ENCODE measurements at regions of chr19 and their contacts with region 1.

Region 1: GRCh38 chr19:37594304-37594981 is at the starts of genes ZNF540 and ZNF571:
- DNase-seq: peak; percentile 83 to 96 (median 93)
- ATAC-seq: peak; percentile 93
- H3K4me3 ChIP-seq: peak within 1 kb of the TSS; percentile 66 to 70
- H3K4me3 Mint-ChIP-seq: peak within 1 kb of the TSS; percentile 98
- H3K27ac ChIP-seq: peak within 1 kb of the TSS; percentile 84 to 97
- H3K27ac Mint-ChIP-seq: peak within 1 kb of the TSS; percentile 99
- H3K4me1 ChIP-seq: peaks cover 10% of the 10 kb centered on the region
- H3K4me1 Mint-ChIP-seq: peaks cover 31% of the 10 kb centered on the region
- H3K27me3 ChIP-seq: no peaks in the 10 kb centered on the region
- H3K27me3 Mint-ChIP-seq: no peaks in the 10 kb centered on the region
- CTCF ChIP-seq: no peak
- total RNA-seq, gene ZNF540: 17.8 to 20.1 TPM
- total RNA-seq, gene ZNF571: 30.5 to 30.8 TPM

Region 2: GRCh38 chr19:36687214-36688056 is 907.0 kb before region 1 on chr19 and contains the start of gene ZNF567:
- CTCF ChIA-PET with region 1: no interaction called
- POLR2A ChIA-PET with region 1: no interaction called
- intact Hi-C with region 1: loop called in 1 of 2 experiments (anchors 1 kb)
- DNase-seq: peak; percentile 91 to 99 (median 98)
- ATAC-seq: peak; percentile 91
- H3K4me3 ChIP-seq: peak within 1 kb of the TSS; percentile 82 to 87
- H3K4me3 Mint-ChIP-seq: peak within 1 kb of the TSS; percentile 99
- H3K27ac ChIP-seq: peak within 1 kb of the TSS; percentile 71 to 81
- H3K27ac Mint-ChIP-seq: peak within 1 kb of the TSS; percentile 96
- H3K4me1 ChIP-seq: peaks cover 18% of the 10 kb centered on the region
- H3K4me1 Mint-ChIP-seq: peaks cover 35% of the 10 kb centered on the region
- H3K27me3 ChIP-seq: no peaks in the 10 kb centered on the region
- H3K27me3 Mint-ChIP-seq: no peaks in the 10 kb centered on the region
- CTCF ChIP-seq: no peak
- total RNA-seq, gene ZNF567: 10.7 to 11.1 TPM

Region 3: GRCh38 chr19:36915992-36916830 is 678.2 kb before region 1 on chr19 and contains the starts of genes ZNF568 and ZNF829:
- CTCF ChIA-PET with region 1: no interaction called
- POLR2A ChIA-PET with region 1: no interaction called
- intact Hi-C with region 1: loop called (anchors 10 kb)
- DNase-seq: peak; percentile 82 to 97 (median 92)
- ATAC-seq: peak; percentile 97
- H3K4me3 ChIP-seq: peak within 1 kb of the TSS; percentile 75 to 79
- H3K4me3 Mint-ChIP-seq: peak within 1 kb of the TSS; percentile 89
- H3K27ac ChIP-seq: peak within 1 kb of the TSS; percentile 80 to 95
- H3K27ac Mint-ChIP-seq: peak within 1 kb of the TSS; percentile 95
- H3K4me1 ChIP-seq: peaks cover 10% of the 10 kb centered on the region
- H3K4me1 Mint-ChIP-seq: peaks cover 36% of the 10 kb centered on the region
- H3K27me3 ChIP-seq: no peaks in the 10 kb centered on the region
- H3K27me3 Mint-ChIP-seq: no peaks in the 10 kb centered on the region
- CTCF ChIP-seq: peak; percentile 91
- total RNA-seq, gene ZNF568: 4.6 to 5.5 TPM
- total RNA-seq, gene ZNF829: 6.1 to 6.2 TPM

Region 4: DNA sequence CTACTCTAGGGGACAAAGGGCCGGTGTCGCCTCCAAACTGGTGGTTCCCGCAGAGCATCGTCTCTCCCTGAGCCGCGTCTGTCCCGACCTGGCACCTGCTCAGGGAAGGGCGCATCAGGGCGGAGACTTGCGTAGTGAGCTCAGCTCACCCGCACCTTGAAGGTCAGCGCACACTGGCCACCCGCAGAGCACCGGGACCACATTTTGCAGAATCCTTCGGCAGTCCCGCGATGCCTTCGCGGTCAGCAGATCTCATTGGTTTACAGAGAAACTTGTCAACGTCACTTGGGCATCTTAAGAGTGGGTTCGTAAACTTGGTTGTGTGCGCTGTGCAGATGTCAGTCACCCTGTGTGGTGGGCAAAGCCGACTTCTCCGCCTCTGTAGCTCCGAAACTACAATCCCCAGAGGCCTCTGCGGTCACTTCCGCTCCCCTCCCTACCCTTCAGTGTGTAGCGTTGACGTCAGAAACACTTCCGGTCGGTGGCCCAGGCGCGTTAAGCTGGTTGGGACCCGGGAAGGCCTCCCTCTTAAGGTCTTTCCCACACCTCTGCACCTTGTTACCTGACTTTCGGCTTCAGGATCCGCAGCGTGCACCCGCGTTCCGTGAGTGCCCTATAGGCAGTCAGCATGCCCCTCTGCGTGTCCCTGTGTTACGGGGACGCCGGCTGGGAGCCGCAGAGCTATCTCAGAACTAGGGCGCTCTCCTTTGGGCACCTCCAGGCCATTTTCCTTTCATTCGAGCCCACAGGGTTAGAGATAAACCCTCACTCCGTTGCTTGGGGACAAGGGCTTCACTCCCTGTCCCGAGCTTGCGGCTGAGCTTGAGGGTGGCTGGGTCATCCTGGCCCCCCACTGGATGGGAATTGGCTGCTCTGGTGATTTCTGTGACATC is 260.0 kb before region 1 on chr19:
- CTCF ChIA-PET with region 1: no interaction called
- POLR2A ChIA-PET with region 1: interaction called, 4 read pairs
- intact Hi-C with region 1: loop called in 1 of 2 experiments (anchors 1 kb)
- DNase-seq: peak; percentile 75 to 96 (median 87)
- ATAC-seq: peak; percentile 97
- H3K4me3 ChIP-seq: peak overlapping the region; percentile 46 to 74
- H3K4me3 Mint-ChIP-seq: peak overlapping the region; percentile 96
- H3K27ac ChIP-seq: peak overlapping the region; percentile 46 to 87
- H3K27ac Mint-ChIP-seq: peak overlapping the region; percentile 95
- H3K4me1 ChIP-seq: peaks cover 10% of the 10 kb centered on the region
- H3K4me1 Mint-ChIP-seq: peaks cover 47% of the 10 kb centered on the region
- H3K27me3 ChIP-seq: no peaks in the 10 kb centered on the region
- H3K27me3 Mint-ChIP-seq: no peaks in the 10 kb centered on the region
- CTCF ChIP-seq: no peak

Region 5: GRCh38 chr19:37506387-37507166 is 87.9 kb before region 1 on chr19 and contains the start of gene ZNF793:
- CTCF ChIA-PET with region 1: no interaction called
- POLR2A ChIA-PET with region 1: interaction called, 21 read pairs
- intact Hi-C with region 1: loop called (anchors 1 kb)
- DNase-seq: peak; percentile 53 to 89 (median 83)
- ATAC-seq: peak; percentile 87
- H3K4me3 ChIP-seq: peak within 1 kb of the TSS; percentile 82 to 86
- H3K4me3 Mint-ChIP-seq: no peak within 1 kb of the TSS
- H3K27ac ChIP-seq: peak within 1 kb of the TSS; percentile 94 to 97
- H3K27ac Mint-ChIP-seq: no peak within 1 kb of the TSS
- H3K4me1 ChIP-seq: peaks cover 16% of the 10 kb centered on the region
- H3K4me1 Mint-ChIP-seq: no peaks in the 10 kb centered on the region
- H3K27me3 ChIP-seq: no peaks in the 10 kb centered on the region
- H3K27me3 Mint-ChIP-seq: no peaks in the 10 kb centered on the region
- CTCF ChIP-seq: no peak
- total RNA-seq, gene ZNF793: 2.4 to 3.3 TPM

Region 6: GRCh38 chr19:37655689-37656371 is 61.4 kb after region 1 on chr19:
- CTCF ChIA-PET with region 1: no interaction called
- POLR2A ChIA-PET with region 1: interaction called, 7 read pairs
- intact Hi-C with region 1: loop called (anchors 1 kb)
- DNase-seq: peak; percentile 60 to 90 (median 86)
- ATAC-seq: peak; percentile 76
- H3K4me3 ChIP-seq: peak overlapping the region; percentile 74 to 81
- H3K4me3 Mint-ChIP-seq: peak overlapping the region; percentile 95
- H3K27ac ChIP-seq: peak overlapping the region; percentile 85 to 92
- H3K27ac Mint-ChIP-seq: peak overlapping the region; percentile 96
- H3K4me1 ChIP-seq: peaks cover 12% of the 10 kb centered on the region
- H3K4me1 Mint-ChIP-seq: peaks cover 38% of the 10 kb centered on the region
- H3K27me3 ChIP-seq: no peaks in the 10 kb centered on the region
- H3K27me3 Mint-ChIP-seq: no peaks in the 10 kb centered on the region
- CTCF ChIP-seq: no peak

Region 7: GRCh38 chr19:37719111-37719926 is 124.9 kb after region 1 on chr19 and contains the start of gene ZNF607:
- CTCF ChIA-PET with region 1: no interaction called
- POLR2A ChIA-PET with region 1: no interaction called
- intact Hi-C with region 1: loop called in 1 of 2 experiments (anchors 1 kb)
- DNase-seq: peak; percentile 61 to 92 (median 81)
- ATAC-seq: peak; percentile 82
- H3K4me3 ChIP-seq: peak within 1 kb of the TSS; percentile 67 to 89
- H3K4me3 Mint-ChIP-seq: peak within 1 kb of the TSS; percentile 96
- H3K27ac ChIP-seq: peak within 1 kb of the TSS; percentile 73 to 79
- H3K27ac Mint-ChIP-seq: peak within 1 kb of the TSS; percentile 98
- H3K4me1 ChIP-seq: peaks cover 11% of the 10 kb centered on the region
- H3K4me1 Mint-ChIP-seq: peaks cover 22% of the 10 kb centered on the region
- H3K27me3 ChIP-seq: no peaks in the 10 kb centered on the region
- H3K27me3 Mint-ChIP-seq: no peaks in the 10 kb centered on the region
- CTCF ChIP-seq: no peak
- total RNA-seq, gene ZNF607: 2.9 to 3.3 TPM

Measured in CD8-positive, alpha-beta T cell (primary cell).